ENCODE measurements at regions of chr10 and their contacts with region 1.

Region 1: GRCh38 chr10:133124357-133125211 is 35.4 kb upstream of the KNDC1 start:
- DNase-seq: peak; percentile 54
- ATAC-seq: peak; percentile 31
- H3K4me3 Mint-ChIP-seq: no peak overlapping the region
- H3K27ac Mint-ChIP-seq: no peak overlapping the region
- H3K4me1 Mint-ChIP-seq: peaks cover 8% of the 10 kb centered on the region
- H3K27me3 Mint-ChIP-seq: peaks cover 19% of the 10 kb centered on the region

Region 2: DNA sequence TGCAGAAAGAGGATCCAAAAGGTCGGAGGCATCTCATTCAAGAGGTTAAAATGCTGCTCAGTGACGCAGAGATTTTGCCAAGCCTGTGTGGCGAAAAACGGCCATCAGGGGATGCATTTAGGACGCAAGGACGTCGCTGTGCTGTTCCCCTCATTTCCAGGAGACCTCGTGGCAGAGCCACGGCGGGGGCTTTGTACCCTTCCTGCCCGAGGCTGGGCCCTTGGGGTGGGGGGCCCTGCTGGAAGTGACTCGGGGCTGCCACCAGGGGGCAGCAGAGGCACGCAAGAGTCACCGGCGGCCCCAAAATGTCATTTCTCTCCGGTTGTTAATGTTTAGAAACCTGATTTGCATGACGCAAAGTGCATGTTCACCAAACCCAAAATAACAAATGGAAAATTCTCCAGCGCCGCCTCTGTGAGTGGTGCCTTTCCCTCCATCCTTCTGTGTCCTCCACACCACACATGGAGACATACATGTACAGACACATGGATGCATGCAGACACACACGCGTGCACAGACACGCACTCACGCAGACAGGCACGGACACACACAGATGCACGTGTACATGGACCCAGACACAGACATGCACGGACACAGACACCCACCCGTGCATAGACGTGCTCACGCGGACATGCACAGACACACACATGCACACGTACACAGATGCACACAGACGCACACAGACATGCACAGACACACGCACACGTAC is 287.6 kb before region 1 on chr10:
- CTCF ChIA-PET with region 1: no interaction called
- POLR2A ChIA-PET with region 1: no interaction called
- intact Hi-C with region 1: loop called (anchors 2 to 10 kb)
- DNase-seq: peak; percentile 68
- ATAC-seq: peak; percentile 60
- H3K4me3 Mint-ChIP-seq: no peak overlapping the region
- H3K27ac Mint-ChIP-seq: no peak overlapping the region
- H3K4me1 Mint-ChIP-seq: no peaks in the 10 kb centered on the region
- H3K27me3 Mint-ChIP-seq: peaks cover 2% of the 10 kb centered on the region

Region 3: DNA sequence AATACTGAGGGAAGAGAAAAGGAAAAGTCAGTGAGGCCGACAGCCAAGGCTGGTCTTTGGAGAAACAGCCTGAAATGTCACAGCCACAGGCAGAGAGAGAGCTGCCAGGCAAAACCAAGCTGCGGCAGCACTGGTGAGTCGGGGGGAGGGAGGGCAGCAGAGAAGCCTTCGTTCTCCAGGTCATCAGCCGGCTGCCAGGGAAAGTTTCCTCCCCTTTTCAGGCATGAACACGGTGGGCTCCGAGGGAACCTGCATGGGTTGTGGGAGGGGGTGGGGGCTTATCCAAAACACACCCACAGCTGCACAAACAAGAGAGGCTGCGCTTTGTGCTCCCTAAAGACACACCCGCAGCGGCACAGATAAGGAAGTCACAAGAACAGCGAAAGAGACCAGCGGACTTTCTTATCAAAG is 276.3 kb before region 1 on chr10:
- CTCF ChIA-PET with region 1: no interaction called
- POLR2A ChIA-PET with region 1: no interaction called
- intact Hi-C with region 1: loop called in 1 of 2 experiments (anchors 10 kb)
- DNase-seq: no peak
- ATAC-seq: no peak
- H3K4me3 Mint-ChIP-seq: peak overlapping the region; percentile 32
- H3K27ac Mint-ChIP-seq: no peak overlapping the region
- H3K4me1 Mint-ChIP-seq: peaks cover 11% of the 10 kb centered on the region
- H3K27me3 Mint-ChIP-seq: peaks cover 3% of the 10 kb centered on the region

Region 4: GRCh38 chr10:132904181-132904819 is 220.3 kb before region 1 on chr10:
- CTCF ChIA-PET with region 1: interaction called, 7 read pairs
- POLR2A ChIA-PET with region 1: no interaction called
- intact Hi-C with region 1: loop called (anchors 1 to 5 kb)
- DNase-seq: peak; percentile 75
- ATAC-seq: peak; percentile 69
- H3K4me3 Mint-ChIP-seq: no peak overlapping the region
- H3K27ac Mint-ChIP-seq: no peak overlapping the region
- H3K4me1 Mint-ChIP-seq: peaks cover 14% of the 10 kb centered on the region
- H3K27me3 Mint-ChIP-seq: peaks cover 13% of the 10 kb centered on the region

Region 5: GRCh38 chr10:132939957-132940790 is 184.4 kb before region 1 on chr10:
- CTCF ChIA-PET with region 1: no interaction called
- POLR2A ChIA-PET with region 1: no interaction called
- intact Hi-C with region 1: loop called (anchors 1 kb)
- DNase-seq: peak; percentile 81
- ATAC-seq: peak; percentile 74
- H3K4me3 Mint-ChIP-seq: no peak overlapping the region
- H3K27ac Mint-ChIP-seq: no peak overlapping the region
- H3K4me1 Mint-ChIP-seq: peaks cover 5% of the 10 kb centered on the region
- H3K27me3 Mint-ChIP-seq: peaks cover 48% of the 10 kb centered on the region

Region 6: GRCh38 chr10:133135116-133135465 is 10.5 kb after region 1 on chr10:
- CTCF ChIA-PET with region 1: no interaction called
- POLR2A ChIA-PET with region 1: no interaction called
- intact Hi-C with region 1: no loop called
- DNase-seq: no peak
- ATAC-seq: no peak
- H3K4me3 Mint-ChIP-seq: no peak overlapping the region
- H3K27ac Mint-ChIP-seq: no peak overlapping the region
- H3K4me1 Mint-ChIP-seq: no peaks in the 10 kb centered on the region
- H3K27me3 Mint-ChIP-seq: no peaks in the 10 kb centered on the region

Measured in activated CD4-positive, alpha-beta T cell treated with anti-CD3 and anti-CD28 coated beads for 36 hours (primary cell).